GM18951 (cell line): ENCODE measurements at regions of chr11 and their contacts with region 1.

Region 1: DNA sequence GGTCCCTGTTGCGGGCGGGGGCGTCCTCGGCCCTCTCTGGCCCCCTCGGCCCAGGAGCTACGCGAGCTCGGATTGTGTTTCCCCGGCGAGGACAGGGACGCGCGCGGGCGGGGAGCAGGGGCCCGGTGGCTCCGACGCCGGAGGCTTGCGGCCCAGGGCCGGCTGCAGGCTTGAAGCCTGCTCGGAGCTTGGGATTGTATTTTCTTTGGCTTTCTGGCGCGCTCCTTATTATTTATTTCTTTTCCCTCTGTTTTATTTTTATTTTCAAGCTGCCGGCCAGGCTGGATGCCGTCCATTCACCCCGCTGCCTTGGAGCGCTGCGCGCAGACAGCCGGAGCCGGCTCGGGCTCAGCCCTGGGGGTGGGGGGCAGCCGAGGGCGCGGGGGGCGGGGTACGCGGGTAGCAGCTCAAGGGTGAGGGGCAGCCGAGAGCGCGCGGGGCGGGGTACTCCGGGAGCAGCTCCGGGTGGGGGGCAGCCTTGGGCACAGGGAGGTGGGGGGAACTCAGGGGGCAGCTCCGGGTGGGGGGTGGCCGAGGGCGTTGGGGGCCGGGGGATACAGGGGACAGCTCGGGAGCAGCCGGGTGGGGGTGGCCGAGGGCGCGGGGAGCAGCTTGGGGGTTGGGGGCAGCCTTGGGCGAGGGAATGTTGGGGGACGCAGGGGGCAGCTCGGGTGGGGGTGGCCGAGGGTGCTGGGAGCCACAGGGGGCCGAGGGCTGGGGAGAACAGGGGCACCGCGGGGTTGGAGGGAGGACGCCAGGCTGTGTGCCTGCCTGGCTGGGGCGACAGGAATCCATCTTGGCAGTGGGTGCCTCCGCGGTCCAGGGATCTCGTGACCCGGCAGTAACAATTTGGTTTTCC is 42.7 kb downstream of the KCNJ1 start:
- POLR2A ChIP-seq: no peak

Region 2: GRCh38 chr11:127825183-127825582 is 999.2 kb before region 1 on chr11:
- in situ Hi-C with region 1: no loop called
- POLR2A ChIP-seq: no peak

Region 3: DNA sequence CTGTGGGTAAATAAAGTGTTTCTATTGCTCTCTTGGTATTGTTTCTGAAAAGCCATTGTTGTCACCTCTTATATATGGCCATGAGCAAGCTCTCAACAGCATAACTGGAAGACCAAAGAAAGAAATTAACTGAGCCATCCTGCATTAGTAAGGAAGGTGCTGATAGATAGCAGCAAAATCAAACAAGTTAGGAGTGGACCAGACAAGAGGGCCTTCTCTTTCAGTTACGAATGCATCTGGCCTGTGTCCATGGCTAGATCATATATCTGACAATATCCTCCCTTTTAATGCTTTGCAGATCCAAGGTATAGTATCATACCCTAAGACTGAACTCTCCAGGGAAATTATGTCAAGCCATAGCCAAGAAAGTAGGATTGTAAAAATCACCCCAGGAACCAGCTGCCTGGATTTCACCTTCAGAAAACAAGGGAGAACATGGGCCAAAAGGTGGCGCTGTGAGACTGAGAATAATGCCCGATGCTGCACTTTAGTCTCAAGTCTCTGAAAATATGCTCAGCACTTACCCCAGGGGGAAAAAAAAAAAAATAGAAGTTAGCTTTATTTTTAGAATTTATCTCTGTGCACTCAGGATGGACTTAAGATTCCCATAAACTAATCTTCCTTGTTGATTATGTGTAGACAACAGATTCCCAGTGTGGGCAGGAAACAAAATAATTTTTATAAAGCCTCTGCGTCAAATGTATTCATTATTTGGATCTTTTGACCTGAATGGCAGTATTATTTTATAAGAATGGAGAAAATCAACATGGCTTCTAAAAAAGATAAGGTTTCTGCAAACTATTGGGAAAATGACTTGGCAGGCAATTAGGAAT is 652.2 kb before region 1 on chr11:
- in situ Hi-C with region 1: loop called (anchors 10 kb)
- POLR2A ChIP-seq: no peak

Region 4: DNA sequence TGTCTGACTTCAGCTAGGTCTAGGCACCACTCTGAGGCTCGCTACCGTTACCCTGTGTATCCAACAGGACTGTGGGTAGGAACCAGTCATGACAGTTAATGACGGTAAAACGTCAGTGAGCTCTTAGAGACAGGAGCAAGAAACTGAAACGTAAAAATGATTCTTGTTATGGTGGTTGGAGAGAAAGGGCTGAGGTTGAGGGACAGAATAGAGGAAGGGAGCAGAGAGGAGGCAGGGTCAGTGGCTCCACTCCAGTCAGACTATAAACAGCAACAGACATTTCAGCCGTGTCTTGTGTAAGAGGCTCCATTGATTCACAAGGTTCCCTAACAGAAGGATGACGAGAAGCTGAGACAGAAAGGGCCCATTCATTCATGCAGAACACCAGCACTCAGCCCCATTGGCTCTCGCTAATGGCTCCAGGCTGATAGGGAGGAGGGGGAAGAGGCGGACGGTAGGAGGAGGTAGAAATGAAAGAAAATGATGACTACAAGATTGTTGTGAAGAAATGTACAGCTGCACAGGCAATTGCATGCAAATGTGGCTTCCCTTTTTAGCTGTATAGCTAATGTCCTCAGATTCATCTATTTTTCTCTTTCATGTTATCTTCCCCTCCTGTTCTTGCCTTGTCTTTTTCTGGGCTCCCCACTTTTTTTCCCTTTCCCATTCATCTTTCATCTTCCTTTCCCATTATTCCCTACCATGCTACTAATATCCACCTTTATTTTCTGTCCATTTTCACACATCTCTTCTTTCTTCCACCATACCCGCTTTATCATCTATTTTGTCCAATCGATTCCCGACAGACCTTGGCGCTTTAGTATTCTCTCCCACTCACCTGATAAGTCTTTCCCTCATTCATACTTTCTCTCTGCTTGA is 271.4 kb before region 1 on chr11:
- in situ Hi-C with region 1: no loop called
- POLR2A ChIP-seq: peak; percentile 48